B cell (primary cell): ENCODE measurements at regions of chr3 and their contacts with region 1.

Region 1: DNA sequence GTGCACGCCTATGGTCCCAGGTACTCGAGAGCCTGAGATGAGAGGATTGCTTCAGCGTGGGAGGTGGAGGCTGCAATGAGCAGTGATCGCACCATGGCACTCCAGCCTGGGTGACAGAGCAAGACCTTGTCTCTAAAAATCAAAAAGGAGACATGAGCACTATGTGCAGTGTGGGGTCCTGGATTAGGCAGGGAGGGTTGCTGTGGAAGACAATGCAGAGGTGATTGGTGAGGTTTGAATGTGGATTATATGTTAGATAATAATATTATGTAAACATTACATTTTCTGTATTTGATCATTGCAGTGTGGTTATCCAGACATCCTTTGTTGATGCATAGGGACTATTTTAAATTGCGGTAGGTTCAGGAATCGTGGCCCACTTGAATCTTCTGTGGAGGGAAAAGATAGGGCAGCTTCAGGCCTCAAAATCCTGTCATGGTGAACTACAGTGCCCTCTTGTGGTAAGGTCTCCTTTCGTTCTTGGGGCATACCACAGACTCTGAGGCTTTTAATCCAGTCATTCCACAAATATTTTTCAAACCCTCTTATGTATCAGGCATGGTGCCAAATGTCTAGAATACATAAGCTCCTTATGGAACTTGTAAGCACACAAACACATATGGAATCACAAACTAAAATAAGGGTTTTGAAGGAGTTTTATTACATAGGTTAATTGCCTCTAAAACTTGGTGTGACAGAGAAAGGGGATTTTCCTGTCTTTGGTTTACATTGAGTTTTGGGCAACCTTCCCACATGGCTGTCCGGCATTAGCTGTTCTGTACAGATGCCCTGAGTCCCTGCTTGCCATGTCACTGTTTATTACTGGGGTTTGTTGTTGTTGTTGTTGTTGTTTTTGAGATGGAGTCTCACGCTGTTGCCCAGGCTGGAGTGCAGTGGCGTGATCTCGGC is 37.7 kb downstream of the GPD1L start:
- DNase-seq: peak; percentile 78
- ATAC-seq: peak; percentile 51
- H3K4me3 ChIP-seq: no peak overlapping the region
- H3K4me3 Mint-ChIP-seq: no peak overlapping the region
- H3K27ac ChIP-seq: no peak overlapping the region
- H3K27ac Mint-ChIP-seq: peak overlapping the region; percentile 52
- H3K4me1 ChIP-seq: peaks cover 12 to 18% of the 10 kb centered on the region in 2 donors
- H3K4me1 Mint-ChIP-seq: peaks cover 21% of the 10 kb centered on the region
- H3K27me3 ChIP-seq: no peaks in the 10 kb centered on the region
- H3K27me3 Mint-ChIP-seq: no peaks in the 10 kb centered on the region
- CTCF ChIP-seq: peak; percentile 83

Region 2: DNA sequence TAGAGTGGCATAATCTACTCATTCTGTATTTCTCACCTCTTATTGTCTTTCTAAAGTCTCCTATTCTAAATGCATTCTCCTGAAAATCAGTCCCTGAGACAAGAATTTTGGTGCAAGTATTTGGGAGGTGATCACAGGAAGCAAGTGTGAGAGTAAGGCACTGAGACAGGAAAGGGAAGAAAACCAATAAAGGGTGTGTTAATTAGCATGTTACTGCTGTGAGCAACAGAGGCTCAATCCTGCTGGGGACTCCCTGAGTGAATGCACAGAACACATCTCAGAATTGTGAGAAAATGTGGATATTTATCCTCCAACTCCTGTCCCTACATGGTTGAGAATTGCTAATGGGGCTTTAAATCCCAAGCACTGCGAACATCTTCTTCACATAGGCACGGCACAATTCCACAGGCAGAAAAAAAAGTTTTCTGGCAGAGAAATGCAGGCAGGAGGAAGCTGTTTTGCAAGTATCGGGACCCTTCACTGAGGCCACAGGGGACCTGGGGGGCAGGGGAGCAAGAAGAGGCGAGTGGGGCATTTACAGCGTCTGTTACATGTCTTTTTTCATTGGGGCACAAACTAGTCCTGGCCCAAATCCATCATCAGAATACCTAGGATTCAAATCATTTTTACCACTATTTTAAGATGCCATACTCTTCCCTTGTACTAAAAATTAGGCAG is 638.6 kb before region 1 on chr3:
- CTCF ChIA-PET with region 1: no interaction called
- POLR2A ChIA-PET with region 1: no interaction called
- intact Hi-C with region 1: no loop called
- DNase-seq: no peak
- ATAC-seq: no peak
- H3K4me3 ChIP-seq: no peak overlapping the region
- H3K4me3 Mint-ChIP-seq: no peak overlapping the region
- H3K27ac ChIP-seq: no peak overlapping the region
- H3K27ac Mint-ChIP-seq: no peak overlapping the region
- H3K4me1 ChIP-seq: peaks cover 5 to 6% of the 10 kb centered on the region in 2 donors
- H3K4me1 Mint-ChIP-seq: peaks cover 8% of the 10 kb centered on the region
- H3K27me3 ChIP-seq: peaks cover 0 to 9% (median 0%) of the 10 kb centered on the region in 4 experiments
- H3K27me3 Mint-ChIP-seq: peaks cover 25% of the 10 kb centered on the region
- CTCF ChIP-seq: no peak

Region 3: GRCh38 chr3:31550452-31551251 is 593.5 kb before region 1 on chr3:
- CTCF ChIA-PET with region 1: interaction called, 3 read pairs
- POLR2A ChIA-PET with region 1: no interaction called
- intact Hi-C with region 1: loop called (anchors 1 kb)
- DNase-seq: peak; percentile 51
- ATAC-seq: peak; percentile 33
- H3K4me3 ChIP-seq: no peak overlapping the region
- H3K4me3 Mint-ChIP-seq: no peak overlapping the region
- H3K27ac ChIP-seq: peak overlapping the region in 1 of 2 donors; percentile 52
- H3K27ac Mint-ChIP-seq: peak overlapping the region; percentile 73
- H3K4me1 ChIP-seq: peaks cover 10 to 18% of the 10 kb centered on the region in 2 donors
- H3K4me1 Mint-ChIP-seq: peaks cover 63% of the 10 kb centered on the region
- H3K27me3 ChIP-seq: no peaks in the 10 kb centered on the region
- H3K27me3 Mint-ChIP-seq: no peaks in the 10 kb centered on the region
- CTCF ChIP-seq: peak; percentile 82

Region 4: DNA sequence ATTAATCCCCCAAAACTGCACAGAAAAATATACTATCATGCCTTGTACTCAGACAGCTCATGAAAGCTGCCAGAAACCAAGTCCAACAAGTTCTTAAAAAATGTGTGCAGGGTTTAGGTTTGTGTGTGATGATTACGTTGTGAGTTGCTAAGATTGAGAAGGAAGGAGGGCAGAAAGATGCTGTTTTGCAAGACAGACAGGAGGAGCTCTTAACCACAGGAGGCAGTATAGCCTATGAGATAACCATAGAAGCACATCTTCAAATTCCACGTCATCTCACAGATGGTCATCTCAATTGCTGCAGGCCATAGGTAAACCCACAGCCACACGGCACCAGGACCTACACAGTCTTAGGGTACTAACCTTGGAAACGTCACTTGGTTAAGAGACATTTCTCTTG is 419.4 kb before region 1 on chr3:
- CTCF ChIA-PET with region 1: interaction called, 15 read pairs
- POLR2A ChIA-PET with region 1: no interaction called
- intact Hi-C with region 1: loop called (anchors 1 kb)
- DNase-seq: peak; percentile 16
- ATAC-seq: no peak
- H3K4me3 ChIP-seq: no peak overlapping the region
- H3K4me3 Mint-ChIP-seq: no peak overlapping the region
- H3K27ac ChIP-seq: no peak overlapping the region
- H3K27ac Mint-ChIP-seq: no peak overlapping the region
- H3K4me1 ChIP-seq: no peaks in the 10 kb centered on the region
- H3K4me1 Mint-ChIP-seq: peaks cover 5% of the 10 kb centered on the region
- H3K27me3 ChIP-seq: no peaks in the 10 kb centered on the region
- H3K27me3 Mint-ChIP-seq: no peaks in the 10 kb centered on the region
- CTCF ChIP-seq: peak; percentile 30

Region 5: DNA sequence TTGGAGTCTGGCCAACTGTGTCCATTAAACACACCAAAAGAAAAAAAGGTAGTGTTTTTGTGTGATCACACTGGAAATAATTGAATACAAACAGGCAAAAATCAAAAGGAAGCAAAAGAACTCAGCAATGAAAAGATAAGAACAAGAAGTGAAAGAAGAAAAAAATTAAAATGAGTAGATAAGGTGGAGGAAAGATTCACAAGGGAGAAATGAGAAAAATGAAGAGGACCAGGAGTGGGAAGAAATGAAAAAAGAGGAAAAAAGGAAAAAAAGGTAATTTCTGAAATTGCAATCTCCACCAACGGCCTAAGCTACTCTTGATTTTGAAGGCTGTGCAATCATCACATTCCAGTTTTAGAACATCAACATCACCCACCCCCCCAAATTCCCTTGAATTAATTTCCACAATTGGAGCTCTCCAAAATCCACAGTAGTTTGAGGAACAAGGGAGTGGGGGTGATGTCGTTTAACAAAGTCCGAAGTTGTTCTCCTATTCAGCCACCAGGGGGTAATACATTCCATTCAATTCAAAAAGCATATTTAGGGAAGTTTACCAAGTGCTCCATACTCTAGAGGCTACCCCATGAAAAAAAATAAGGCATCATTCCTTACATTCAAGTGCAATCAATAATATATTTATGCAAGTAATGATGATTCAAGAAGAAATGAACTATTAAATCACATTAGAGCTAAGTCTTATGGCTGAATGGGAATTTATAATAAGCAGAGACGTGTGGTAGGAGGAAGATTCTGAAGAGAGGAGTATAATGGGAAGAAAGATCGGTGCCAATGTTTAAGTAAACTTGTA is 125.1 kb before region 1 on chr3:
- CTCF ChIA-PET with region 1: interaction called, 41 read pairs
- POLR2A ChIA-PET with region 1: no interaction called
- intact Hi-C with region 1: loop called (anchors 1 kb)
- DNase-seq: peak; percentile 53
- ATAC-seq: peak; percentile 53
- H3K4me3 ChIP-seq: no peak overlapping the region
- H3K4me3 Mint-ChIP-seq: no peak overlapping the region
- H3K27ac ChIP-seq: no peak overlapping the region
- H3K27ac Mint-ChIP-seq: no peak overlapping the region
- H3K4me1 ChIP-seq: peaks cover 7 to 10% of the 10 kb centered on the region in 2 donors
- H3K4me1 Mint-ChIP-seq: peaks cover 13% of the 10 kb centered on the region
- H3K27me3 ChIP-seq: no peaks in the 10 kb centered on the region
- H3K27me3 Mint-ChIP-seq: no peaks in the 10 kb centered on the region
- CTCF ChIP-seq: peak; percentile 81

Region 6: DNA sequence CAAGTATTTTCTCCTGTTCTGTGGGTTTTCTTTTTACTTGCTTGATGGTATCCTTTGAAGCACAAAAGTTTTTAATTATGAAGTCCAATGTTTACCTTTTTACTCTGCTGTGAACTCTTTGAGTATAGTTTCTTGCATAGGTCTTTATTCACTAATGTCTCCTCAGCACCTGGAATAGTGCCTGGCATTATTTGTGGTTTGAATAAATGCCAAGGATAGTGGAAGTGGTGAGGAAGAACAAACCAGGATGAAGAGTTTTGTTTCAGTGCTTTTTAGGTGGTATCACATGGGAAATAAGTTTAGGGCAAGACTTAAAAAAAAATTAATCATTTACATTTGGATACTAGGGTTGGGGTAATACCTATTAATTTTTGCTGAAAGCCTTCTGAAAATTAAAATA is 12.0 kb before region 1 on chr3:
- CTCF ChIA-PET with region 1: interaction called, 20 read pairs
- POLR2A ChIA-PET with region 1: interaction called, 5 read pairs
- intact Hi-C with region 1: no loop called
- DNase-seq: no peak
- ATAC-seq: no peak
- H3K4me3 ChIP-seq: no peak overlapping the region
- H3K4me3 Mint-ChIP-seq: no peak overlapping the region
- H3K27ac ChIP-seq: no peak overlapping the region
- H3K27ac Mint-ChIP-seq: no peak overlapping the region
- H3K4me1 ChIP-seq: peaks cover 0 to 3% of the 10 kb centered on the region in 2 donors
- H3K4me1 Mint-ChIP-seq: peaks cover 5% of the 10 kb centered on the region
- H3K27me3 ChIP-seq: no peaks in the 10 kb centered on the region
- H3K27me3 Mint-ChIP-seq: no peaks in the 10 kb centered on the region
- CTCF ChIP-seq: no peak

Region 7: GRCh38 chr3:32226870-32227500 is 82.9 kb after region 1 on chr3:
- CTCF ChIA-PET with region 1: no interaction called
- POLR2A ChIA-PET with region 1: no interaction called
- intact Hi-C with region 1: no loop called
- DNase-seq: no peak
- ATAC-seq: no peak
- H3K4me3 ChIP-seq: no peak overlapping the region
- H3K4me3 Mint-ChIP-seq: no peak overlapping the region
- H3K27ac ChIP-seq: no peak overlapping the region
- H3K27ac Mint-ChIP-seq: no peak overlapping the region
- H3K4me1 ChIP-seq: no peaks in the 10 kb centered on the region
- H3K4me1 Mint-ChIP-seq: no peaks in the 10 kb centered on the region
- H3K27me3 ChIP-seq: peaks cover 0 to 2% (median 0%) of the 10 kb centered on the region in 4 experiments
- H3K27me3 Mint-ChIP-seq: peaks cover 26% of the 10 kb centered on the region
- CTCF ChIP-seq: no peak